ENCODE measurements at regions of chr9 and their contacts with region 1.

Region 1: DNA sequence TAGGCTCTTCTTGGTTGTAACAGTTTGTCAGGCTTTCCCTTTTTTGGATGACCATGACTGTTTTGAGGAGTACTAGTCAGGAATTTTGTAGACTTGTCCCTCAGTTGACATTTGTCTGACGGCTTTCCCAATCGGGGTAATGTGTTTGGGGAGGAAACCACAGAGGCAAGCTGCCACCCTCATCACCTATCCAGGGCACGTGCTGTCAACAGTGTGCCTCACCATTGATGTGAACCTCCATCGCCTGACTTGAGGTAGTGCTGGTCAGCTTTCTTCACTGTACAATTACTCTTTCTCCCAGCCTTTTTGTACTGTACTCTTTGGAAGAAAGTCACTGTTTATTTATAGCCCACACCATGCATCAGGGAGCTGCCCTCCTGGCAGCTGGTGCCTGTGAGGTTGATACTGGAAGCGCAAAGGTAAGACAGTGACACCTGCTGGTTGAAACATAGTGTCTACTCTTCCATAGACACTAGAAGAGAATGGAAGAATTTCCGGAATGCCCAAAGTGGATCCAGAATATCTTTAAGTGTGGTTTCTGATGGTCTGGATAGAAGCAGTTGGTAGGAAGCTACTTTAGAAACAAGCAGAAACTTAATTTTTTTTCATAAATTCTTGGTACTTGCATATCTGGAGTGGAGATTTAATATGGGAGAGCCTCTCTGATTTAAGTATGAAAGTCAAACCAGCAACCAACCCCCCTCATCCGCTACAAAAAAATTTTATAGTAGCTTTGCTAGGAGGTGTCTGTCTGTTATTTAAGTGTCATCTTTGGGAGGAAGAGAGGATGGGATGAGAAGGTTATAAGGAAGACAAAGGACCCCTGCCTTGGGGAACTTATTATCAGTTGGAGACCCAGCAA is 69.3 kb downstream of the SNX30 start:
- DNase-seq: no peak
- H3K4me3 ChIP-seq: no peak overlapping the region
- H3K27ac ChIP-seq: no peak overlapping the region
- H3K4me1 ChIP-seq: no peaks in the 10 kb centered on the region
- H3K27me3 ChIP-seq: no peaks in the 10 kb centered on the region
- CTCF ChIP-seq: peak; percentile 21 to 75 (median 63)
- POLR2A ChIP-seq: no peak

Region 2: DNA sequence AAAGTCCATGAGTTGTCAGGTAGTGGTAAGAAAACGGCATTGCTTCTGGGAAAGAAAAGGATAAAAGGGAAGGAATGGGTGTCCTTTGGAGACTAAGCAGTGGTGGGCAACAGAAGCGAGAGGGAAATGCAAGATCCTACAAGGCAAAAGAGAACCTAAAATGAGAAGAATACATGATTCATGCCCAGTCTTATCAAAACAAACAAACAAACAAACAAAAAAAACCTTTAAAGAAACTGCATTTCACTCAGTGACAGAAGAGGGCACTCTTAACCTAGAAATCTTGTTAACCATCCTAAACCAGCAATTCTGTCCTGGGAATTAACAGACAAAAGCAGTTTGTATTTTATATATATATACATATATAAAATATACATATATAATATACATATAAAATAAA is 733.2 kb before region 1 on chr9:
- intact Hi-C with region 1: loop called (anchors 10 kb)
- DNase-seq: no peak
- H3K4me3 ChIP-seq: no peak overlapping the region
- H3K27ac ChIP-seq: peak overlapping the region in 1 of 4 donors; percentile 22
- H3K4me1 ChIP-seq: peaks cover 0 to 37% (median 0%) of the 10 kb centered on the region in 3 donors
- H3K27me3 ChIP-seq: no peaks in the 10 kb centered on the region
- CTCF ChIP-seq: peak in 4 of 6 experiments; percentile 27 to 57 (median 46)
- POLR2A ChIP-seq: no peak

Region 3: GRCh38 chr9:112486221-112487007 is 333.5 kb before region 1 on chr9 and contains the start of gene KIAA1958:
- intact Hi-C with region 1: no loop called
- DNase-seq: peak; percentile 14
- H3K4me3 ChIP-seq: peak within 1 kb of the TSS; percentile 65 to 99 (median 94)
- H3K27ac ChIP-seq: peak within 1 kb of the TSS; percentile 65 to 87 (median 84)
- H3K4me1 ChIP-seq: peaks cover 0 to 20% (median 4%) of the 10 kb centered on the region in 3 donors
- H3K27me3 ChIP-seq: no peaks in the 10 kb centered on the region
- CTCF ChIP-seq: no peak
- POLR2A ChIP-seq: peak in 1 of 4 donors; percentile 61
- total RNA-seq, gene KIAA1958: 2.7 to 5.7 (median 5.2) TPM

Measured in esophagus squamous epithelium (tissue), 5 donors.